Astrocyte of the cerebellum (primary cell): ENCODE measurements at regions of chr3 and their contacts with region 1.

Region 1: DNA sequence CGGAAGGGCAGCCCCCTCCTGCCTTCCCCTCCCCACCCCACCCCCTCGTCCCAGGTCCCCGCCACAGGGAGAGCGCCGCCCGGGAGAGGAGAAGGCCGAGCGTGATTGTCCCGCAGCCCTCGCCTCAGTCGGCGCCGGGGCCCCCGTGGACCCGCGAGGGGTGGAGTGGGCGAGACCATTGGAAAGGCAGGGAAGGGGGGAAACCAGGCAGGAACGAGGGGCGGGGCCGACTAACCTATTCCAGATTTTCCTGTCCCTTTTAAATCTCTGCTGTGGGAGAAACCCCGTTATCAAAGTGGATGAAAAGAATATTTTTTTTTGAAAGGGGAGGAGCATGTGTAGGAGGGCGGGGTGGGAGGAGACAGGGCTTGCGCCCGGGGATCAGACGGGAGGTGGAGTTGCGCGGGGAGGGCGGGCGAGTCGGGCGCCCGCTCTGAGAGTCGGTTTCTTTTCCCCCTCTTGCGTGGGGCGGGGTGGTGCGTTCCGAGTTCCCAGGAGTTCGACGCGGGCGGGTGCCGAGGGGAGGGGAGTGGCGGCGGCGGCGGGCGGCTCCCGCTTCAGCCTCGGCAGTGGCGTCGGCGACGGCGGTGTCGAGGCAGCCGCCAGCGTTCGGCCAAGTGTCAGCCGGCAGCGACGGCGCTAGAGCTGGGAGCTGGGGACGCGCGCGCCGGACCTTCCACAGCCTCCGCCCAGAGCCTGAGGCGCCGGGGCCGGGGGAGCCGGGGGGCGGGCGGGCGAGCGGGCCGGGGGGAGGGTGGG is at the start of gene NECTIN3:
- DNase-seq: peak; percentile 97
- H3K4me3 ChIP-seq: peak within 1 kb of the TSS; percentile 78
- CTCF ChIP-seq: no peak

Region 2: DNA sequence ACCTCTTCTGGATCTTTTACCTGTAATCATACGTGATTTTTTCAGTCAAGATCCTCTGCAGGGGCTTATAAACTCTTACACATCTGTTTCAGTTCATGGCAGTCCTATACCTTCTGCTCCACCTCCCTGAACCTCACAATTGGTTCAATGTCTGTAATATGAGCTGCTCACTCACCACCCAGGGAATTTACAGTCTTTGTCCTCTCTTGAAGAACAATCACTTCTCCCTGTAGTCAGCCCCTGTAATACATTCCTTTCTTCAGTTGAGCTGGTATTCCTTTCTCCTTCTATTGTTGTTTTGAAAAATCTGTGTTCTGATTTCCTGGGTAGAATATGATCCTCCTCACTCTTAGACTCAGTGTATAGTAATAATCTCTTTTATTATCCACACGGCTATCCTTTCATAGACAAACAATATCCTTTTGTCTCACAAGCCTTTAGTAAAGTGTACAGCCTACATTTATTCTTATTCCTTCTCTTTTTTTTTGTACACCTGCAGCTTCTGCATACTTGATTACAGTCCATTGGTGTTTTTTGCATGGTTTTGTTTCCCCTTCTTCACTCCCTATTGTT is 102.0 kb after region 1 on chr3:
- in situ Hi-C with region 1: loop called (anchors 5 kb)
- DNase-seq: peak; percentile 34
- H3K4me3 ChIP-seq: no peak overlapping the region
- CTCF ChIP-seq: no peak